Prostate gland (tissue), 2 donors: ENCODE measurements at regions of chr1 and their contacts with region 1.

Region 1: DNA sequence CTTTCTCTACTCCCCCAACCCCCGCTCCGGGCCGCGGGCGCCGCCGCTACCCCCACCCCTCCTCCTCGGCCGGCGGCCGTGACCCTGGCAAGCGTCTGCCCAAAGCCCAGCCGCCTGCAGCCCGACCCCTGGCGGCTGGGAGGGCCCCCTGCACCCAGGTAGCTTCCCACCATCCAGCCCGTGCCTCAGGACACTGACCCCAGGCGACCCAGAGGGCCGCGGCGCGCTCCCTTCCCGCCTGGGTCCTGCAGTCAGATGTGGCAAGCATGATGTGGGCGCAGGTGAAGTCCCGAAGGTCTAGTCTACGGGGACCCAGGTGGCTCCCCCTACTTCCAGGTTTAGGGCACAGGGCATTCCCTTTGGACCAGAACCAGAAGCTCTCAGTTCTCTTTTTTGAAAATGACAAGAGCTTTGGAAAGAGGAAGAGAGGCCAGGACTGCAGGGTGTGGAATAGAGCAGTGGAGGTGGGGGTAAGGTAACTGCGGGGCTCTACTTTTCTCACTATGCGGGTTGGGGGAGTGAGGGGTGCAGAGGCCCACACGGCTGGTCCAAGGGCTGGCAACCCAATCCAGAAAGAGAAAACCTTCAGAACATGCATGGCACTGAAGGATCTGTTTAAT is at the start of gene DENND4B:
- DNase-seq: peak; percentile 71
- H3K4me3 ChIP-seq: peak within 1 kb of the TSS; percentile 92 to 95
- H3K27ac ChIP-seq: peak within 1 kb of the TSS; percentile 92 to 96
- H3K4me1 ChIP-seq: no peaks in the 10 kb centered on the region
- H3K27me3 ChIP-seq: no peaks in the 10 kb centered on the region
- CTCF ChIP-seq: peak; percentile 92 to 93 (median 93)
- POLR2A ChIP-seq: no peak
- total RNA-seq, gene DENND4B: 18.1 to 28.3 TPM

Region 2: GRCh38 chr1:153670859-153671627 is 275.7 kb before region 1 on chr1 and contains the start of gene ILF2:
- intact Hi-C with region 1: no loop called
- DNase-seq: peak; percentile 98
- H3K4me3 ChIP-seq: peak within 1 kb of the TSS; percentile 62 to 77
- H3K27ac ChIP-seq: peak within 1 kb of the TSS; percentile 79 to 83
- H3K4me1 ChIP-seq: peaks cover 8% of the 10 kb centered on the region
- H3K27me3 ChIP-seq: no peaks in the 10 kb centered on the region
- CTCF ChIP-seq: peak in 1 of 4 experiments; percentile 34
- POLR2A ChIP-seq: peak; percentile 87
- total RNA-seq, gene ILF2: 116 to 122 TPM

Region 3: DNA sequence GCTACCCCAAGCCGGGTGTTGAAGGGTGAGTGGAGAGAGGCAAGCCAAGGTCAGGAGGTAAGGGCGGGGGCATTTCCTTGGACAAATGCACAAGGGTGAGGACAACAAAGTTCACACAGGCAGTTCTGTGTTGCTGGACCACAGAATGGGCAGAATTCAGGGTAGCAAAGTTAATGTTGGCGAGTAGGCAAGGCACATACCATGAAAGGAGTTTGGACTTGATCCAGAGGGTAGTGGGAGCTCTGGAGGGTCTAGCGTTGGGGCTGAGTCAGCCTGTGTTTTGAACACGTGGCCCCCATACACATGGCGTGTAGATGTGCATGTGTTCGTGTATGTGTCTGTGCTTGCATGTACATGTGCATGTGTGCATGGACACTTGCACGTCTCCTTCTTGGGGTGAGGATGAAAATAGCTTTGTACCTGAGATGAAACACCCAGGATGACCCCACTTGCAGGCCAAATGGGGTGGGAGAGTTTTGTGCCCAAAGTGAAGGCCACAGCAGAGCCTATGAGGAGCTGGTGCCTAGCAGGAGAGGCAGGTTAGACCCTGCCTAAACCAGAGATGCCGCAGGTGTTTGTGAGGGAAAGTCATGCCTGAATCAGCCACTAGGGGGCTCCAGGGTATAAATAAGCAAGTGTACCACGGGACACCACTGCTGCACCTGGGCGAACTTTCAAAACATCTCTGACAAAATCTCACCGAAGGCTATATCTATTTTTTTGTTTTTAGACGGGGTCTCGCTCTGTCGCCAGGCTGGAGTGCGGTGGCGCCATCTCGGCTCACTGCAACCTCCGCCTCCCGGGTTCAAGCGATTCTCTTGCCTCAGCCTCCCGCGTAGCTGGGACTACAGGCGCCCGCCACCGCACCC is 149.7 kb before region 1 on chr1:
- intact Hi-C with region 1: loop called (anchors 5 kb)
- DNase-seq: peak; percentile 85
- H3K4me3 ChIP-seq: no peak overlapping the region
- H3K27ac ChIP-seq: no peak overlapping the region
- H3K4me1 ChIP-seq: no peaks in the 10 kb centered on the region
- H3K27me3 ChIP-seq: no peaks in the 10 kb centered on the region
- CTCF ChIP-seq: peak; percentile 90 to 93 (median 91)
- POLR2A ChIP-seq: no peak

Region 4: DNA sequence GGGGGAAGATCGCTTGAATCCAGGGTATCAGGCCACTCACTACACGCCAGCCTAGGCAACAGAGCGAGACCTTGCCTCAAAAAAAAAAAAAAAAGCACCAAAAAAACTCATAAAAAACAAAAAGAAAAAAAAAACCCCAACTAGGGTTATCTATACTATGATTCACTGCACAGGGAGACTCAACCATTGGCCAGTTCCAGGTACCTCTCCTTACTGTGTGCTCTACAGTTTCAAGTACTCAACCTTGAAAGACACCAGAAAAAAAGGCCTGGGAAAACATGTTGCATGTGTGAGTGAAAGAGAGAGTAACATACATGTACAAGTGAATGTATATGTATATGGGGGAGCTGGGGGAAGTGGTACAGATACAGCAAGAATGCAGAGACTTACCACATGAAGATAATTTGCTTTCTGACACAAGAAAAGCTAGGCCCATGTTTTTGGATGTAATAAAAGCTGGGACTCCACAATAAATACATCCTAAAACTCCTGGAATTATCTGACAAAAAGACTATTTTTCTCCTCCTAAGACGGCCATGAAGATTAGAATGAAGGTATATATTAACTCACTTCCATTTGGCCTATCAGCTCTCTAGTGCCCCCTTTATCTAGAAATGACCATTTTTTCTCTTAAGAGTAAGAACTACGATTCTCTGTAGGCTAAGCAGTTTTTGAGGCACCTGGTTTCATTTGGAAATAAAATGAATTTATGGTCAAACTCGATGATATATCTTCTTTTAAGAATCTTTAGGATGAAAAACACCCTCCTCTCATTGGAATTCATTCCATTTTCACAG is 119.4 kb before region 1 on chr1:
- intact Hi-C with region 1: loop called (anchors 5 kb)
- DNase-seq: no peak
- H3K4me3 ChIP-seq: no peak overlapping the region
- H3K27ac ChIP-seq: no peak overlapping the region
- H3K4me1 ChIP-seq: no peaks in the 10 kb centered on the region
- H3K27me3 ChIP-seq: no peaks in the 10 kb centered on the region
- CTCF ChIP-seq: no peak
- POLR2A ChIP-seq: no peak